ENCODE measurements at regions of chr4 and their contacts with region 1.

Region 1: DNA sequence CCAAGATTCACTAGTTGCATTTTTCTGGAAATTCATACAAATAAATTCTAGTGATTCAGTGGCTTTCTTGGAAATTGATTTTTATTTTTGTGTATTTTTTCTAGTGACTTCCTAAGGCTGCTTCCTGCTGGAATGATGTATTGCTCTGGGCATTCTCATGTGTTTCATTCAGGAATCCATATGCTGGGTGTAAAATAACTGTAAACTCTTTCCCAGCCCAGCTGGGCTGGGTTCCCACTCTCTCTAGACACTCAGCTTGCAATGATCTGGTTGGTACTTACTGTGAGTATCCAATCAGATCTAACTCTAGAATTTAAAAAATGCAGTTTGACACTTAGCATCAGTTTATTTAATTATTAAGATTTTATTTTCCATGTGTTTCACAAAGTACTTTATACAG is 882.2 kb downstream of the STIM2 start:
- DNase-seq: no peak
- H3K4me3 ChIP-seq: no peak overlapping the region
- H3K27ac ChIP-seq: no peak overlapping the region
- H3K4me1 ChIP-seq: no peaks in the 10 kb centered on the region
- H3K27me3 ChIP-seq: no peaks in the 10 kb centered on the region
- CTCF ChIP-seq: no peak

Region 2: DNA sequence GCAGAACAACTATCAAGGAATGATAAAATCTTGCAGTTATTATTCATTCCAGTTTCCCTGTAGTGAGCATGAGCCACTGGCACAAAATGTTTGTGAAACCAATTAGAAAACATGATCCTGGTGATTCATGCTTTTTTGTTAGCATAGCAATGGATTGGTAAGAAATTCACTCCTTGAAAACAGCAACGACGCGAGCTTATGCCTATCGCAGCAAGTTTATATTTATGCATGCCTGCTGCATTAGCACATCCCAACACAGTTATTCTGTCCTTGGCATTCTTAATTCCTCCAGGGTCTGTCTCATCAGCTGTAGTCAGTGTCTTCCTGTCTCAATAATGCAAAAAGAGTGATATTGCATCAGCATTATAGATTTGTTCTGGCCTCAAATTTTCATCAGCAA is 93.7 kb after region 1 on chr4:
- CTCF ChIA-PET with region 1: no interaction called
- dilution Hi-C with region 1: no loop called
- in situ Hi-C with region 1: loop called in 1 of 2 experiments (anchors 25 kb)
- intact Hi-C with region 1: no loop called
- DNase-seq: no peak
- H3K4me3 ChIP-seq: no peak overlapping the region
- H3K27ac ChIP-seq: no peak overlapping the region
- H3K4me1 ChIP-seq: no peaks in the 10 kb centered on the region
- H3K27me3 ChIP-seq: no peaks in the 10 kb centered on the region
- CTCF ChIP-seq: no peak

Measured in mammary epithelial cell (primary cell).